Left ventricle myocardium superior (tissue), 1 donor: ENCODE measurements at regions of chr20 and their contacts with region 1.

Region 1: DNA sequence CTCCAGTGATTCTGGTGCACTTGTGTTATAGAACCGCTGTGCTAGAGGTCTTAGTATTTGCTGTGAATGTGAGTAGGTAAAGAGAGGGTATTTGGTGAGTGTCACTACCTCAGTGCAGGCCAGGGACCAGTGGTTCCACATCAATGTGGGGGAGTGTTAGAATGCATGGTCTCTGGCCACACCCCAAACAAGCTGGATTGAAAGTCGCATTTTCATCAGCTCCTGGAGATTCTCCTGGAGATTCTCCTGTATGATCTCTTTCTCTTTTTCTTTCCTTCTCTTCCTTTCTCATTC is 26.8 kb upstream of the BCAS1 start:
- DNase-seq: no peak
- ATAC-seq: no peak

Region 2: DNA sequence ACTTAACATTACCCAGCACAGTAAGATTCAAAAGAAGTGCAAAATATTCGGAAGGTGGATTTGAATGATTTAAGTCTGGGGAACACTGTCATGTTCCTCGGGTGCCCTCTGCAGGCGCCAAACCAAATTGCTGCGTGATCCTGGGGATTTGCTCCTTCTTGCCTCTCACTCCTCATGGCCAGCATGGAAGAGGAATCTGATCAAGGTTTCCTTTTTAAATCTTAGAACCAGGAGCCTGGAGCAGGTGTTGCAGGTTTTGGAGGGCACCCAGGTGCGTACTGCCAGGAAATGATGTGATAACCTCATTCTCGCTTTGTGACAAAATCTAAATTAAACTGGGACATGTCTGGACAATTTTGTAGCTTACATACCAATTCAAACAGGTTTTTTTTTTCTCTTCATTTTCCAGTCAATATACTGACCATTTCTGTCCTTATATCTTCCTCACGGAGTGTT is 102.6 kb after region 1 on chr20:
- intact Hi-C with region 1: loop called (anchors 2 kb)
- DNase-seq: peak; percentile 78
- ATAC-seq: peak; percentile 65